ENCODE measurements at regions of chr4 and their contacts with region 1.

Region 1: GRCh38 chr4:32798471-32799159 is 2078.4 kb downstream of the PCDH7 start:
- DNase-seq: no peak
- ATAC-seq: no peak
- H3K4me3 ChIP-seq: no peak overlapping the region
- H3K4me3 Mint-ChIP-seq: no peak overlapping the region
- H3K27ac ChIP-seq: no peak overlapping the region
- H3K27ac Mint-ChIP-seq: no peak overlapping the region
- H3K4me1 ChIP-seq: no peaks in the 10 kb centered on the region
- H3K4me1 Mint-ChIP-seq: no peaks in the 10 kb centered on the region
- H3K27me3 ChIP-seq: no peaks in the 10 kb centered on the region
- H3K27me3 Mint-ChIP-seq: no peaks in the 10 kb centered on the region
- CTCF ChIP-seq: no peak

Region 2: GRCh38 chr4:32661229-32661628 is 137.4 kb before region 1 on chr4:
- CTCF ChIA-PET with region 1: no interaction called
- POLR2A ChIA-PET with region 1: no interaction called
- intact Hi-C with region 1: no loop called
- DNase-seq: no peak
- ATAC-seq: no peak
- H3K4me3 ChIP-seq: no peak overlapping the region
- H3K4me3 Mint-ChIP-seq: no peak overlapping the region
- H3K27ac ChIP-seq: no peak overlapping the region
- H3K27ac Mint-ChIP-seq: no peak overlapping the region
- H3K4me1 ChIP-seq: no peaks in the 10 kb centered on the region
- H3K4me1 Mint-ChIP-seq: no peaks in the 10 kb centered on the region
- H3K27me3 ChIP-seq: no peaks in the 10 kb centered on the region
- H3K27me3 Mint-ChIP-seq: no peaks in the 10 kb centered on the region
- CTCF ChIP-seq: no peak

Region 3: GRCh38 chr4:32748498-32748897 is 50.1 kb before region 1 on chr4:
- CTCF ChIA-PET with region 1: no interaction called
- POLR2A ChIA-PET with region 1: no interaction called
- intact Hi-C with region 1: loop called in 1 of 2 experiments (anchors 5 kb)
- DNase-seq: no peak
- ATAC-seq: no peak
- H3K4me3 ChIP-seq: no peak overlapping the region
- H3K4me3 Mint-ChIP-seq: no peak overlapping the region
- H3K27ac ChIP-seq: no peak overlapping the region
- H3K27ac Mint-ChIP-seq: no peak overlapping the region
- H3K4me1 ChIP-seq: no peaks in the 10 kb centered on the region
- H3K4me1 Mint-ChIP-seq: no peaks in the 10 kb centered on the region
- H3K27me3 ChIP-seq: no peaks in the 10 kb centered on the region
- H3K27me3 Mint-ChIP-seq: no peaks in the 10 kb centered on the region
- CTCF ChIP-seq: no peak